ENCODE measurements at regions of chr21 and their contacts with region 1.

Region 1: GRCh38 chr21:26019236-26019635 is 151.3 kb downstream of the APP start:
- DNase-seq: no peak

Region 2: GRCh38 chr21:25370311-25370744 is 648.9 kb before region 1 on chr21:
- intact Hi-C with region 1: no loop called
- DNase-seq: peak; percentile 73

Region 3: GRCh38 chr21:25960402-25960801 is 58.8 kb before region 1 on chr21:
- intact Hi-C with region 1: loop called in 1 of 2 experiments (anchors 2 kb)
- DNase-seq: no peak

Region 4: GRCh38 chr21:26072666-26073615 is 53.7 kb after region 1 on chr21:
- intact Hi-C with region 1: no loop called
- DNase-seq: no peak

Measured in posterior vena cava (tissue), 2 donors.